Activated CD4-positive, alpha-beta T cell treated with anti-CD3 and anti-CD28 coated beads, Interleukin-2, amount 10 ng/mL, durations not matched to agents 7 days and 5 days (primary cell): ENCODE measurements at regions of chr11 and their contacts with region 1.

Region 1: DNA sequence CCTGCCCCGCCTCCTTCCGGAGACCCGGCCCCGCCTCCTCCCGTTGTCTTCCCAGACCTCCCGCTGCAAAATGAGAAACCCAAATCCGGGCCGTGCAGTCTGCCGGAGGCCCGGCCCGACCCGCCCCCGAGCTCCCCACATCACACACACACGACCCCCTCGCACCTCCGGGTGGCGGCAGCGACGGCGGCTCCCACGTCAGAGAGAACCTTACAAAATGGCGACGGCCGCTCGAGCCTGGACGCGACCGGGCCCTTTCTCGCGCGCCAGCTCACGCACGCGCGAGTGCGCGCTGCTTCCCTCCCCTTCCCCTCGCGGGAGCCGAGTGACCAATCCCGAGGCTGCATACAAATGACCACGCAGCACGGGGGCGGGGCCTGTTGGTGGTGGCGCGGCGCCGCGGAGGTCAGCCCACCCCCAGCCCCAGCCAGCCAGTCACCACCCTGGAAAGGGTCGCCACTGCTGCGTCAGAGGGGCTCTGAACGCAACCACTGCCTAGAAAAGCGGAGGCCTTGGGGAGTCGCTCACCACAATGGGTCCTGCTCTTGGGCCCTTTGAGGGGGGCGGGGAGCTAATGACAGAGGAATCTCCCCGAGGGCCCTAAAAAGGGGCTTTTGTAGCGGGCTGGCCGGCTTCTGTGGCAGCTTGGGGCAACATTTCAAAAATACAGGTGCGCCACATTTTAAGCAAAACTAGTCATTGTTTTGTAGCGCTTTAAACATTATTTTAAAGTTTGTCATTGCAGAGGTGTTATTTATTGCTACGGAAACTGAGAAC is at the start of gene RBM4B:
- DNase-seq: peak; percentile 97
- H3K4me3 Mint-ChIP-seq: peak within 1 kb of the TSS; percentile 93
- H3K27ac Mint-ChIP-seq: peak within 1 kb of the TSS; percentile 99
- H3K4me1 Mint-ChIP-seq: peaks cover 38% of the 10 kb centered on the region
- H3K27me3 Mint-ChIP-seq: no peaks in the 10 kb centered on the region
- total RNA-seq, gene RBM4B: 18.1 to 20.4 TPM

Region 2: GRCh38 chr11:66386171-66387069 is 291.4 kb before region 1 on chr11:
- CTCF ChIA-PET with region 1: interaction called, 10 read pairs
- POLR2A ChIA-PET with region 1: no interaction called
- DNase-seq: peak; percentile 88
- H3K4me3 Mint-ChIP-seq: no peak overlapping the region
- H3K27ac Mint-ChIP-seq: no peak overlapping the region
- H3K4me1 Mint-ChIP-seq: peaks cover 10% of the 10 kb centered on the region
- H3K27me3 Mint-ChIP-seq: peaks cover 5% of the 10 kb centered on the region

Region 3: GRCh38 chr11:66438504-66439466 is 239.0 kb before region 1 on chr11 and contains the start of gene MRPL11:
- CTCF ChIA-PET with region 1: interaction called, 15 read pairs
- POLR2A ChIA-PET with region 1: no interaction called
- DNase-seq: peak; percentile 93
- H3K4me3 Mint-ChIP-seq: peak within 1 kb of the TSS; percentile 84
- H3K27ac Mint-ChIP-seq: peak within 1 kb of the TSS; percentile 98
- H3K4me1 Mint-ChIP-seq: peaks cover 18% of the 10 kb centered on the region
- H3K27me3 Mint-ChIP-seq: no peaks in the 10 kb centered on the region
- total RNA-seq, gene MRPL11: 72.4 to 76.4 TPM

Region 4: GRCh38 chr11:66579017-66579606 is 98.7 kb before region 1 on chr11:
- CTCF ChIA-PET with region 1: interaction called, 30 read pairs
- POLR2A ChIA-PET with region 1: no interaction called
- DNase-seq: peak; percentile 72
- H3K4me3 Mint-ChIP-seq: no peak overlapping the region
- H3K27ac Mint-ChIP-seq: no peak overlapping the region
- H3K4me1 Mint-ChIP-seq: peaks cover 9% of the 10 kb centered on the region
- H3K27me3 Mint-ChIP-seq: peaks cover 7% of the 10 kb centered on the region

Region 5: DNA sequence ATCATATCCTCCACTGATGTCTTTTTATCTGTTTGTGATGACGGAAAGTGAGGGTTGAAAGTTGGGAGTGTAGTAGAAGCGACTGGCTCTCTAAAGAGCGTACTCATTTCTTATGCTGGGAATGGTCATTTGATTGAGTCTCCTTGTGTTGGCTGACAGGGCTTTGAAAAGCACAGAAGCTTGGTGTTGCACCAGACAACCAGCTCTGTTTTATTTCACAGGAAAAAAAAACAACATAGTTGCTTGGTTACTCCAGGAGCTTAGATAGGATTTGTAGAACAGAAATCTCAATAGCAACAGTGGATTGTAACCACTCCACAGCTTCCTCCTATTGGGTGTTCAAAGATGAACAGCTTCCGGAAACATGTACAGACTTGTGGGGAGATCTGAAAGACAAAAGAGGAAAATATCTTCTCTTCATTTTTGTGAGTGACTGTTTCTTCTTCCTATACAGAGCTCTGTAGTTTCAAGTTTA is 58.7 kb before region 1 on chr11:
- CTCF ChIA-PET with region 1: interaction called, 11 read pairs
- POLR2A ChIA-PET with region 1: interaction called, 4 read pairs
- DNase-seq: peak; percentile 66
- H3K4me3 Mint-ChIP-seq: peak overlapping the region; percentile 98
- H3K27ac Mint-ChIP-seq: peak overlapping the region; percentile 99
- H3K4me1 Mint-ChIP-seq: peaks cover 69% of the 10 kb centered on the region
- H3K27me3 Mint-ChIP-seq: no peaks in the 10 kb centered on the region

Region 6: GRCh38 chr11:66768088-66768521 is 90.3 kb after region 1 on chr11:
- CTCF ChIA-PET with region 1: no interaction called
- POLR2A ChIA-PET with region 1: no interaction called
- DNase-seq: no peak
- H3K4me3 Mint-ChIP-seq: no peak overlapping the region
- H3K27ac Mint-ChIP-seq: no peak overlapping the region
- H3K4me1 Mint-ChIP-seq: no peaks in the 10 kb centered on the region
- H3K27me3 Mint-ChIP-seq: no peaks in the 10 kb centered on the region

Region 7: GRCh38 chr11:66800720-66801428 is 123.1 kb after region 1 on chr11:
- CTCF ChIA-PET with region 1: no interaction called
- POLR2A ChIA-PET with region 1: no interaction called
- DNase-seq: no peak
- H3K4me3 Mint-ChIP-seq: no peak overlapping the region
- H3K27ac Mint-ChIP-seq: no peak overlapping the region
- H3K4me1 Mint-ChIP-seq: no peaks in the 10 kb centered on the region
- H3K27me3 Mint-ChIP-seq: no peaks in the 10 kb centered on the region

Region 8: GRCh38 chr11:66842896-66843775 is 165.3 kb after region 1 on chr11 and contains the start of gene RCE1:
- CTCF ChIA-PET with region 1: interaction called, 11 read pairs
- POLR2A ChIA-PET with region 1: no interaction called
- DNase-seq: peak; percentile 91
- H3K4me3 Mint-ChIP-seq: peak within 1 kb of the TSS; percentile 85
- H3K27ac Mint-ChIP-seq: peak within 1 kb of the TSS; percentile 96
- H3K4me1 Mint-ChIP-seq: peaks cover 50% of the 10 kb centered on the region
- H3K27me3 Mint-ChIP-seq: no peaks in the 10 kb centered on the region
- total RNA-seq, gene RCE1: 23.1 to 23.7 TPM